H1 (cell line): ENCODE measurements at regions of chr16 and their contacts with region 1.

Region 1: DNA sequence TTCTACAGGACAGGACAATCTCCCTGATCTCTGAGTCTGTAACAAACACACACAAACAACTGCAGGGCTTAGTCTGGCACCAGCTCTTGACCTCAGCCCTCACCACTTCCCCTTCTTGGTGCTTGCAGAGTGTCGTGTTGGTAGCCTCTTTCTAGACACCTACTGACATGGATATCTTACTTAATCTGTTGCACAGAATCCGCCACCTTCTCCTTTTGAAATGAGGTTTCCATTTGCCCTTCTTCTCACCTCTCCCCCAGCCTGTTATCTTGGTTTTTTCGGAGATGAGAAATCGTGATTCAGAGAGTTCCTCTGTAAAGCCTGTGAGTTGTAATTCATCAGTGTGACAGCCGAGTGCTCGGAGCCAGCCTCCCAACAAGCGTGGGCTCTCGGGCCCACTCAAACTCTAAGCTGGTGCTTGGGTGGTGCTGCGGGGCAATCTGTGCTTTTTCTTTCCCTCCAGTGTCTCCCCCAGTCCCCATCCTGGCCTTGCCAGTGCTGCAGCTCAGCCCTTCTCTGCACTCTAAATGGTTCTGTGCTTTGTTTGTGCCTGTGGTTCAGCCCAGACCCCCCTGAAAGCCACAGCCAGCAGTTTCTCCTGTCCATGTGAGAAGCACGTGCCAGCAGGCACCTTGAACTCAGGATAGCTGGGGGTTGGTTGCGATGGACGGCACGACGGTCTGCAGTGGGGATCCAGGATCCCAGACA is 28.1 kb downstream of the KIAA0513 start:
- DNase-seq: no peak
- H3K4me3 ChIP-seq: no peak overlapping the region
- H3K27ac ChIP-seq: no peak overlapping the region
- H3K4me1 ChIP-seq: peaks cover 0 to 5% (median 4%) of the 10 kb centered on the region in 4 experiments; a peak in 4 of 7 replicates
- H3K27me3 ChIP-seq: no peaks in the 10 kb centered on the region
- CTCF ChIP-seq: no peak
- EP300 ChIP-seq: no peak
- POLR2A ChIP-seq: no peak
- RAD21 ChIP-seq: no peak

Region 2: GRCh38 chr16:84952335-84953189 is 103.1 kb before region 1 on chr16:
- CTCF ChIA-PET with region 1: no interaction called
- POLR2A ChIA-PET with region 1: no interaction called
- DNase-seq: peak; percentile 54 to 86
- H3K4me3 ChIP-seq: no peak overlapping the region
- H3K27ac ChIP-seq: no peak overlapping the region
- H3K4me1 ChIP-seq: no peaks in the 10 kb centered on the region
- H3K27me3 ChIP-seq: peaks cover 0 to 2% (median 0%) of the 10 kb centered on the region in 4 experiments; a peak in 1 of 7 replicates
- CTCF ChIP-seq: peak; percentile 79 to 94 (median 89)
- EP300 ChIP-seq: no peak
- POLR2A ChIP-seq: no peak
- RAD21 ChIP-seq: peak; percentile 78 to 84

Region 3: GRCh38 chr16:84988322-84989080 is 67.2 kb before region 1 on chr16:
- CTCF ChIA-PET with region 1: interaction called, 11 read pairs
- POLR2A ChIA-PET with region 1: no interaction called
- DNase-seq: no peak
- H3K4me3 ChIP-seq: no peak overlapping the region
- H3K27ac ChIP-seq: no peak overlapping the region
- H3K4me1 ChIP-seq: no peaks in the 10 kb centered on the region
- H3K27me3 ChIP-seq: no peaks in the 10 kb centered on the region
- CTCF ChIP-seq: peak in 1 of 3 experiments; percentile 12; a peak in 1 of 4 replicates
- EP300 ChIP-seq: no peak
- POLR2A ChIP-seq: no peak
- RAD21 ChIP-seq: no peak

Region 4: GRCh38 chr16:84999129-84999528 is 56.5 kb before region 1 on chr16:
- CTCF ChIA-PET with region 1: interaction called, 12 read pairs
- POLR2A ChIA-PET with region 1: interaction called, 4 read pairs
- DNase-seq: no peak
- H3K4me3 ChIP-seq: no peak overlapping the region
- H3K27ac ChIP-seq: no peak overlapping the region
- H3K4me1 ChIP-seq: peaks cover 0 to 16% (median 4%) of the 10 kb centered on the region in 4 experiments; a peak in 6 of 7 replicates
- H3K27me3 ChIP-seq: no peaks in the 10 kb centered on the region
- CTCF ChIP-seq: no peak
- EP300 ChIP-seq: no peak
- POLR2A ChIP-seq: no peak
- RAD21 ChIP-seq: no peak

Region 5: DNA sequence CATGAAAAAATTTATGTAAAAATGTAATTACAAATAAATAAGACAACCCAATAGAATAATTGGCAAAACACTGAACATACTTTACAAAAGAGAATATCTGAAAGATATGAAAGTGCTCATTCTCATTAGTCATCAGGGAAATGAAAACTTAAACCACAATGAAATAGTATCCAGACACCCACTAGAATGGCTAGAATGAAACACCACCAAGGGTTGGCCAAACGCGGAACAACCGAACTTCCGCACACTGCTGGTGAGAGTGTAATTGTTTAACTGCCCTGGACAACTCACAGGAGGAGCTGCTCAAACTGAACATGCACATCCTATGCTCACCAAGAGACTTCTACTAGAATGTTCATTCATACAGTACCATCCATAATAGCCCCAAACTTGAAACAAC is 38.5 kb before region 1 on chr16:
- CTCF ChIA-PET with region 1: interaction called, 12 read pairs
- POLR2A ChIA-PET with region 1: no interaction called
- DNase-seq: no peak
- H3K4me3 ChIP-seq: no peak overlapping the region
- H3K27ac ChIP-seq: no peak overlapping the region
- H3K4me1 ChIP-seq: no peaks in the 10 kb centered on the region; a peak in 1 of 7 replicates
- H3K27me3 ChIP-seq: no peaks in the 10 kb centered on the region
- CTCF ChIP-seq: no peak
- EP300 ChIP-seq: no peak
- POLR2A ChIP-seq: no peak
- RAD21 ChIP-seq: no peak

Region 6: DNA sequence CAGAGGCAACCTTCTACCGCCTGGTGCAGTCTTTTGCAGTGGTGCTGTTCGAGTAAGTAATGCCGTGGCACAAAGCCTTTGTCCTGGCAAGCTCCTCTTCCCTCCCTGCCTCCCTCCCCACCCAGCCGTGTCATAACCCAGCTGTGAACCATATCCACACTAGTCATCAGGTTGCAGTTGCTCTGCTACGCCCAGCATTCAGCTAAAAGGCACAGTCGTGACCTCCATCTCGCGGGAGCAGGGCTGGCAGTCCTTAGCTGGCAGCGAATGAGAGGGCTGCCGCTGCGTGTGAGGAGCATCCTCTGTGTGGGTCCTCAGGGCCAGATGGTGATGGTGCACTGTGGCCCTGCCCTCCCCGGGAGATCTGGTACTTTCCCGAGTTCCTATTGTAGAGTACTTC is 17.3 kb after region 1 on chr16:
- CTCF ChIA-PET with region 1: interaction called, 59 read pairs
- POLR2A ChIA-PET with region 1: no interaction called
- DNase-seq: no peak
- H3K4me3 ChIP-seq: no peak overlapping the region
- H3K27ac ChIP-seq: no peak overlapping the region
- H3K4me1 ChIP-seq: peaks cover 0 to 13% (median 4%) of the 10 kb centered on the region in 4 experiments; a peak in 5 of 7 replicates
- H3K27me3 ChIP-seq: peaks cover 0 to 11% (median 7%) of the 10 kb centered on the region in 4 experiments; a peak in 4 of 7 replicates
- CTCF ChIP-seq: no peak
- EP300 ChIP-seq: no peak
- POLR2A ChIP-seq: no peak
- RAD21 ChIP-seq: no peak

Region 7: GRCh38 chr16:85086347-85087291 is 31.0 kb after region 1 on chr16:
- CTCF ChIA-PET with region 1: interaction called, 37 read pairs
- POLR2A ChIA-PET with region 1: no interaction called
- DNase-seq: peak; percentile 44 to 89
- H3K4me3 ChIP-seq: no peak overlapping the region
- H3K27ac ChIP-seq: no peak overlapping the region
- H3K4me1 ChIP-seq: peaks cover 11 to 21% (median 19%) of the 10 kb centered on the region in 4 experiments
- H3K27me3 ChIP-seq: peaks cover 8 to 39% (median 32%) of the 10 kb centered on the region in 4 experiments
- CTCF ChIP-seq: peak; percentile 89 to 94 (median 93)
- EP300 ChIP-seq: no peak
- POLR2A ChIP-seq: no peak
- RAD21 ChIP-seq: peak; percentile 68 to 83